WTC11 (cell line): ENCODE measurements at regions of chrX and their contacts with region 1.

Region 1: GRCh38 chrX:129637217-129638109 is 17.3 kb downstream of the APLN start:
- DNase-seq: peak; percentile 78
- ATAC-seq: peak; percentile 57
- H3K4me3 Mint-ChIP-seq: no peak overlapping the region
- H3K27ac Mint-ChIP-seq: no peak overlapping the region
- H3K4me1 Mint-ChIP-seq: peaks cover 12% of the 10 kb centered on the region
- H3K27me3 Mint-ChIP-seq: no peaks in the 10 kb centered on the region
- CTCF ChIP-seq: peak; percentile 87

Region 2: GRCh38 chrX:129593137-129593536 is 44.3 kb before region 1 on chrX:
- CTCF ChIA-PET with region 1: no interaction called
- POLR2A ChIA-PET with region 1: no interaction called
- DNase-seq: no peak
- ATAC-seq: peak; percentile 38
- H3K4me3 Mint-ChIP-seq: no peak overlapping the region
- H3K27ac Mint-ChIP-seq: no peak overlapping the region
- H3K4me1 Mint-ChIP-seq: peaks cover 12% of the 10 kb centered on the region
- H3K27me3 Mint-ChIP-seq: no peaks in the 10 kb centered on the region
- CTCF ChIP-seq: no peak

Region 3: GRCh38 chrX:129654419-129655165 is 17.1 kb after region 1 on chrX and contains the start of gene APLN:
- CTCF ChIA-PET with region 1: interaction called, 28 read pairs
- POLR2A ChIA-PET with region 1: no interaction called
- DNase-seq: peak; percentile 28
- ATAC-seq: peak; percentile 49
- H3K4me3 Mint-ChIP-seq: peak within 1 kb of the TSS; percentile 64
- H3K27ac Mint-ChIP-seq: no peak within 1 kb of the TSS
- H3K4me1 Mint-ChIP-seq: peaks cover 26% of the 10 kb centered on the region
- H3K27me3 Mint-ChIP-seq: peaks cover 61% of the 10 kb centered on the region
- CTCF ChIP-seq: no peak
- total RNA-seq, gene APLN: 2.5 to 4.2 TPM (median 2.6 TPM) in 3 replicates